ENCODE measurements at regions of chr10 and their contacts with region 1.

Region 1: DNA sequence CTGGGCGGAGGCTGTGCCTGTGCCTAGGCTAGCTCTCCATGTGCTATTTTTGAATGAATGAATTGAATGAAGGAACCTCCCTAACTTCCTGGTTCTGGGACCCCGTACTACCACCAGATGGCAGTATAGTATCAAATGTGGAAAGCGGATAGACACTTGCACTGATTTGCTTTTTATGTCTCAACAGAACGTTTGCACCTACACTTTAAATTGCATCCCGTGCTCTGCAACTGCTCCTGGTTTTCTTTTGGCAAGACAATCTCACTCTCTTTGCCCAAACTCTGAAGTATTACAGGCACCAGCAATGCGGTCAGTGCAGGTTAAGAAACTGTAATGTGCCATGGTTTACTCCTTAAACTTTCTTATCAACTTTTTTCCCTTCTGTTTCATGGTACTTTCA is 6.5 kb downstream of the FZD8 start:
- DNase-seq: peak in 1 of 2 experiments; percentile 18
- H3K4me3 ChIP-seq: no peak overlapping the region
- H3K27ac ChIP-seq: no peak overlapping the region
- H3K4me1 ChIP-seq: no peaks in the 10 kb centered on the region
- H3K27me3 ChIP-seq: no peaks in the 10 kb centered on the region
- CTCF ChIP-seq: peak; percentile 81

Region 2: DNA sequence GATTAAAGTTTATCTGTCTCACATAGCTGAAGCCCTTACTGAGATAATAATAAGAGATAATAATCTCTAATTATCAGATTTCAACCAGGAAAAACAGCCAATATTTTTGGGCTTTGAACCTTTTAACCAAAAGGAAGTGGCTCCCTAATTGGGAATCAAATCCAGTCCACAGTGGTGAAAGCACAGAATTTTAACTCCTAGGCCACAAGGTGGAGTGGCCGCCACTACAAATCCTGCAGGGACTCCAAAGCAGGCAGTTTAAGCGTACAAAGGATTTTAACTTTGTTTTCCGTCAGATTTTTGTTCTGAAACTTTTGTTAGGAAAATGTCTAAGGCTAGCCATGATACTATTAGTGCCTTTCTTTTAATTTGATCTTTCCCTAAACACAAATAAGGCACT is 398.8 kb before region 1 on chr10:
- CTCF ChIA-PET with region 1: no interaction called
- POLR2A ChIA-PET with region 1: no interaction called
- intact Hi-C with region 1: loop called (anchors 2 kb)
- DNase-seq: peak in 1 of 2 experiments; percentile 16
- H3K4me3 ChIP-seq: no peak overlapping the region
- H3K27ac ChIP-seq: no peak overlapping the region
- H3K4me1 ChIP-seq: no peaks in the 10 kb centered on the region
- H3K27me3 ChIP-seq: no peaks in the 10 kb centered on the region
- CTCF ChIP-seq: peak; percentile 30; the same call in 1 of the 2 replicates

Region 3: DNA sequence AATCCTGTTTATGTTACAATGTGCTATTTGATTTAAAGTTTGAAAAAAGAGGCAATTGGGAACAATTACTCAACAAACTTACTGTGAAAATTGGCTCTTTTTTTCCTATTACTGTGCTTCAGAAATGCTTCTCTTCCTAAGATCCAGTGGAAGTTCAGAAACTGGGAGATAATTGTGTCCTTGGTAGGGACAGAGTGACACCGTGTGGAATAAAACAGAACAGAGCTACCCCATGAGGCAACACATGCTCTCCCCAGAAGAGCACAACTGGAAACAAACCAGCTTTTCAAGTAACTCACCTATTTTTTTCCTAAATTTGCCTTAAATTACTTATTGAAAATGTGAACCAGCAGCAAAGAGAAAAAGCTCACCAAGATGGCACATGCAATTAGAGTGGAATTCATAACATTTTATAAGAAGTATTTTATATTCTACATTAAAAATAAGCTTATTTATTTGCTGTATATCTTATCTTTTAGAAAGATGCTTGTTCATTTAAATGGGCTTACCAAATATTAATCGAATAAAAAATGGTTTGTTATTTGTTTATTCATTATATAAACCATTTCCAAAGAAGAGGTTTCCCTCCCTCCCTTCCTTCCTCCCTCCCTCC is 1143.8 kb after region 1 on chr10:
- CTCF ChIA-PET with region 1: interaction called, 3 read pairs
- POLR2A ChIA-PET with region 1: no interaction called
- intact Hi-C with region 1: loop called (anchors 2 kb)
- DNase-seq: no peak
- H3K4me3 ChIP-seq: no peak overlapping the region
- H3K27ac ChIP-seq: no peak overlapping the region
- H3K4me1 ChIP-seq: no peaks in the 10 kb centered on the region
- H3K27me3 ChIP-seq: peaks cover 18% of the 10 kb centered on the region
- CTCF ChIP-seq: peak; percentile 46

Region 4: GRCh38 chr10:36880898-36881297 is 1245.3 kb after region 1 on chr10:
- CTCF ChIA-PET with region 1: interaction called, 4 read pairs
- POLR2A ChIA-PET with region 1: no interaction called
- intact Hi-C with region 1: loop called (anchors 5 kb)
- DNase-seq: no peak
- H3K4me3 ChIP-seq: no peak overlapping the region
- H3K27ac ChIP-seq: no peak overlapping the region
- H3K4me1 ChIP-seq: no peaks in the 10 kb centered on the region
- H3K27me3 ChIP-seq: peaks cover 4% of the 10 kb centered on the region; the same call in 1 of the 2 replicates
- CTCF ChIP-seq: peak; percentile 49